ENCODE measurements at regions of chr1 and their contacts with region 1.

Region 1: GRCh38 chr1:224113918-224114786 is at the start of gene FBXO28:
- DNase-seq: peak; percentile 99
- H3K4me3 Mint-ChIP-seq: peak within 1 kb of the TSS; percentile 90
- H3K27ac Mint-ChIP-seq: peak within 1 kb of the TSS; percentile 82
- H3K4me1 Mint-ChIP-seq: peaks cover 8% of the 10 kb centered on the region
- H3K27me3 Mint-ChIP-seq: no peaks in the 10 kb centered on the region
- CTCF ChIP-seq: no peak
- total RNA-seq, gene FBXO28: 97.6 and 110 TPM in 2 replicates

Region 2: DNA sequence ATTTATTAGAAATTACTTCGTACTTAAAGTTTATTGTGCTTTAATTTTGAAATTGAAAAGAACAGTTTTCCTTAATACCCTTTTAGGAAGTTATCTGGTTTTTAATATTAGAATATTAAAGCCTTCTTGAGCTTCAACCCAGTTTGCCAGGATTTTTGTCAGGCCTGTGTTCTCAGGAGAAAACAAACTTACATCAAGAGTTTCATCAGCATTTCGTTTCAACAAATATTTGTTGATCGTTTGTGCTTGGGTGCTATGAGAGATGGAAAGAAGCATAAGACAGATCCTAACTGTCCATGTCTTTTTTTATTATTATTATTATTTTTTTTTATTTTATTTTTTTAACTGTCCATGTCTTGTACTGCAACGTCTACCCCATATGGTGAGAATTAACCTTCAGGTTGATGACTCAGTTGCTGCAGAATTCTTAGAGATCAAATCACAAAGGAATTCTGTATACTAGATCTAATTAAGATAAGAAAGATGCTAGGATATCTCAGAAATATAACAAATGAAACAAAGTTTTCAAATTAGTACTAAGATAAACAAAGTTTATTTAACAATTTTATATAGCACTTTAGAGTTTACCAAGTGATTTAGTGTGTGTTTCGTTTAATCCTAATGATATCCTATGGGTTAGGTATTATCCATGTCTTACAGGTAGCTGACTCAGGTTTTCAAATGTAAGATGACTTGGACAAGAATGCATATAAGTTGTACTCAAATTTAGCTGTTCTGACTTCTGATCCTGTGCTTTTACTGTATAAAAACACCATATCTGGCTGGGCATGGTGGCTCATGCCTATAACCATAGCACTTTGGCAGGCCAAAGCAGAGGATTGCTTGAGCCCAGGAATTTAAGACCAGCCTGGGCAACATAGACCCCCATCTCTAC is 14.0 kb after region 1 on chr1:
- CTCF ChIA-PET with region 1: interaction called, 49 read pairs
- POLR2A ChIA-PET with region 1: interaction called, 58 read pairs
- intact Hi-C with region 1: no loop called
- DNase-seq: no peak
- H3K4me3 Mint-ChIP-seq: no peak overlapping the region
- H3K27ac Mint-ChIP-seq: no peak overlapping the region
- H3K4me1 Mint-ChIP-seq: peaks cover 24% of the 10 kb centered on the region
- H3K27me3 Mint-ChIP-seq: no peaks in the 10 kb centered on the region
- CTCF ChIP-seq: no peak

Region 3: GRCh38 chr1:224168859-224169380 is 54.8 kb after region 1 on chr1:
- CTCF ChIA-PET with region 1: interaction called, 13 read pairs
- POLR2A ChIA-PET with region 1: interaction called, 8 read pairs
- intact Hi-C with region 1: no loop called
- DNase-seq: peak; percentile 50
- H3K4me3 Mint-ChIP-seq: no peak overlapping the region
- H3K27ac Mint-ChIP-seq: no peak overlapping the region
- H3K4me1 Mint-ChIP-seq: peaks cover 12% of the 10 kb centered on the region
- H3K27me3 Mint-ChIP-seq: peaks cover 25% of the 10 kb centered on the region
- CTCF ChIP-seq: no peak

Region 4: GRCh38 chr1:224300314-224300713 is 186.2 kb after region 1 on chr1:
- CTCF ChIA-PET with region 1: interaction called, 8 read pairs
- POLR2A ChIA-PET with region 1: interaction called, 13 read pairs
- intact Hi-C with region 1: loop called (anchors 1 kb)
- DNase-seq: peak; percentile 90
- H3K4me3 Mint-ChIP-seq: no peak overlapping the region
- H3K27ac Mint-ChIP-seq: peak overlapping the region; percentile 65
- H3K4me1 Mint-ChIP-seq: peaks cover 6% of the 10 kb centered on the region
- H3K27me3 Mint-ChIP-seq: no peaks in the 10 kb centered on the region
- CTCF ChIP-seq: no peak

Region 5: DNA sequence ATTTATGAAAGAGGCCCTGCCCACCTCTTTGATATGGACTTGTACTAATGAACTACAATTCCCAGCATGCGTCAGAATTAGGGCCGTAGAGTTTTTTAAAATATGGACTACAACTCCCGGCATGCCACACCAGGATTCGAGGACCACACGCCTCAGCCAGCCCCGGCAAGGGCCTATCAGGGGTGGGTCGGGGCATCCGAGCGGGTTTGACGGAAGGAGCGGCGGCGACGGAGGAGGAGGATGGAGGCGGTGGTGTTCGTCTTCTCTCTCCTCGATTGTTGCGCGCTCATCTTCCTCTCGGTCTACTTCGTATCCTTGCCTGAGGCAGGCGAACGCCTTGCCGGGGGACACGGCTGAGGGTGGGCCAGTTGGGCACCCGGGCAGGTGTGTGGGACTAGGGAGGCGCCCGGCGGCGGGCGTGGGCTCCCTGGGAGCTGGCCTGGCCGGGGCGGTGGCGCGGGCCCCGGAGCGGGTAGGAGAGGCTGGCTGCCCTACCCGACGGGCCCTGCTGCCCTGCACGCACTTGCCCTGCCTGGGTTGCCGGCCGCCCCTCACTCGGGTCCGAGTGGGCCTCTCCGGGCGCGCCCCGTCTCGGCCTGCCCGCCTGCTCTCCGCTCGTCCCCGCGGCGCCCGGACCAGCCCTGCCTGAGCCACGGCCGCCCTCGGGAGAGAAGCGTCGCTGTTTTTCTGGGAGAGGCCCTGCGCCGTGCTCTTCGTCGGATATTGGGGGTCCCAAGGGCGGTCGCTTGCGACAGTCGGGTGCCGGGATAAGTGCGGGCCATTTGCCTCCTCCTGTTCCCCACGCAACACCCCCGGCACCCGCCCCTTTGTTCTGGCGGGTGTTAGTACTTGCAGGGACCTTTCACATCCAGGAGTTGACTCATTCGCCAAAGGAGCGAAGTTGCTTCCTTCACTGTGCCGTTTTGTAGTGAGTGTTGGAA is 242.8 kb after region 1 on chr1 and contains the start of gene CNIH4:
- CTCF ChIA-PET with region 1: interaction called, 5 read pairs
- POLR2A ChIA-PET with region 1: interaction called, 25 read pairs
- intact Hi-C with region 1: no loop called
- DNase-seq: peak; percentile 99
- H3K4me3 Mint-ChIP-seq: peak within 1 kb of the TSS; percentile 89
- H3K27ac Mint-ChIP-seq: peak within 1 kb of the TSS; percentile 74
- H3K4me1 Mint-ChIP-seq: peaks cover 17% of the 10 kb centered on the region
- H3K27me3 Mint-ChIP-seq: no peaks in the 10 kb centered on the region
- CTCF ChIP-seq: peak; percentile 11
- total RNA-seq, gene CNIH4: 190 and 212 TPM in 2 replicates

Measured in MCF 10A (cell line).